Naive thymus-derived CD4-positive, alpha-beta T cell (primary cell): ENCODE measurements at regions of chr17 and their contacts with region 1.

Region 1: DNA sequence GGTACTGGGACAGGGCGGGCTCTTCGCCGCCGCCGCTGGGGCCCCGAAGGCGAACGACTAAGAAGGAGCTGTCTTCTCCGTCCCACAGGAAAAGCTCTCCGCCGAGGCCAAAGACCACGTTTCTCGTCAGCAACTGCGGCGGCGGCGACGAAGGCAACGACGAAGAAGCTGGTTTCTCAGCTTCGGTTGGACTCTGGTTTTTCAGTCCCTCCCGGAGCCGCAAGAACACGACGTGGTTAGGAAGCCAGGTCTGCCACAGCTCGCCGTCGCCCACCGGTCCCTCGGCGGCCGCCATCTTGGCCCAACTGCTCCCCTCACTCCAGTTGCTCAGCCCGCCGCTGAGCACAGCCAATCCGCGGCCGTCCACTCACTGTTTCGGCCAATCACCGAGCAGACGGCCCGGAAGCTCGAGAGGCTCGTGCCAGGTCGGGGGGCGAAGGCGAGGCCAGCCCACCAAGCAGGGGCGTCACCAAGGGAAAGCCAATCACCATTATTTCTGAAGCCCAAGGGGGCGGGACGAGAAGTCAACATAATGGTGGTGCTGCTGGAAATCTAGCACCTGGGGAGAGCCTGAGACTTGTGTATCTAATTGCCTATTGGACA is at the start of gene NUP88:
- DNase-seq: peak; percentile 86 to 97 (median 95)
- ATAC-seq: peak; percentile 94
- H3K4me3 ChIP-seq: peak within 1 kb of the TSS; percentile 93
- H3K4me3 Mint-ChIP-seq: peak within 1 kb of the TSS; percentile 93 to 100 (median 98)
- H3K27ac ChIP-seq: peak within 1 kb of the TSS; percentile 94
- H3K27ac Mint-ChIP-seq: peak within 1 kb of the TSS; percentile 89 to 100 (median 99)
- H3K4me1 ChIP-seq: peaks cover 26% of the 10 kb centered on the region in 2 donors
- H3K4me1 Mint-ChIP-seq: peaks cover 16 to 56% (median 40%) of the 10 kb centered on the region in 7 donors
- H3K27me3 ChIP-seq: no peaks in the 10 kb centered on the region
- H3K27me3 Mint-ChIP-seq: peaks cover 0 to 2% (median 0%) of the 10 kb centered on the region in 5 donors
- total RNA-seq, gene NUP88: 85.7 to 135 (median 111) TPM

Region 2: GRCh38 chr17:4997302-4998026 is 422.0 kb before region 1 on chr17 and contains the starts of genes INCA1 and KIF1C:
- CTCF ChIA-PET with region 1: no interaction called
- POLR2A ChIA-PET with region 1: no interaction called
- intact Hi-C with region 1: loop called in 1 of 2 experiments (anchors 2 kb)
- DNase-seq: peak; percentile 84 to 95 (median 92)
- ATAC-seq: peak; percentile 99
- H3K4me3 ChIP-seq: peak within 1 kb of the TSS; percentile 75
- H3K4me3 Mint-ChIP-seq: peak within 1 kb of the TSS; percentile 80 to 95 (median 88)
- H3K27ac ChIP-seq: peak within 1 kb of the TSS; percentile 83
- H3K27ac Mint-ChIP-seq: peak within 1 kb of the TSS; percentile 76 to 95 (median 88)
- H3K4me1 ChIP-seq: peaks cover 8 to 11% of the 10 kb centered on the region in 2 donors
- H3K4me1 Mint-ChIP-seq: peaks cover 18 to 29% (median 26%) of the 10 kb centered on the region in 7 donors
- H3K27me3 ChIP-seq: no peaks in the 10 kb centered on the region
- H3K27me3 Mint-ChIP-seq: no peaks in the 10 kb centered on the region
- total RNA-seq, gene INCA1: 0.38 to 0.42 (median 0.41) TPM in 4 of 5 experiments, not detected in the other
- total RNA-seq, gene KIF1C: 11.5 to 46.5 (median 21.0) TPM

Region 3: DNA sequence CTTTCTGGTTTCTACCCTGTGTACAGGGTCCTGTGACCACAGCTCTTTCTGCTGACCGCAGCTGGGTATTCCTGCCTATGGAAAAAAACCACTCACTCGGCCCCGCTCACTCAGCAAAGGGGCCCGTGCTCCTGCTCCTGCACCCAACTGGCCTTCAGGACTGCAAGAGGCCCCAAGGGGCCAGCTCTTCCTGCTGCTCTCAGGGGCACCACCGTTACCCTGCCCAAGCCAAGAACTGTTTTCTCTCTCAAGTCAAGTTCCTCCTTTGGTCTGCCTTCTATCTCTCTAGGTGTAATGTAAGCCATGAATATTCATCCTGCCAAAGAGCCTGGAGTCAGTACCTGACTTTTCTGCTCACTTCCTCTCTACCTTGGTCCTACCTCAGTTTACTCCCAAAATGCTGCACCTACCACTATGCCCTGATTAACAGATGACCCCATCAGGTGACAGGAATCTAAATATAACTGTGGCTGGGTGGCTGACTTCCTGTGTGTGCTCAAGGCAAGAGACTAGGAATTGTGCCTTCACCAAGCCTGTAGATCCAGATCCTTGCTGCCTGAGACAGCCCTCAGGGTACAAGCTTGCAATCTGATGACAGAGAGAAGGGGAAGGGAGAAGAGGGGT is 164.4 kb before region 1 on chr17:
- CTCF ChIA-PET with region 1: no interaction called
- POLR2A ChIA-PET with region 1: no interaction called
- intact Hi-C with region 1: no loop called
- DNase-seq: no peak
- ATAC-seq: no peak
- H3K4me3 ChIP-seq: no peak overlapping the region
- H3K4me3 Mint-ChIP-seq: peak overlapping the region in 2 of 10 donors; percentile 1 to 15
- H3K27ac ChIP-seq: no peak overlapping the region
- H3K27ac Mint-ChIP-seq: peak overlapping the region in 4 of 9 donors; percentile 3 to 72 (median 17)
- H3K4me1 ChIP-seq: peaks cover 0 to 7% of the 10 kb centered on the region in 2 donors
- H3K4me1 Mint-ChIP-seq: peaks cover 5 to 16% (median 14%) of the 10 kb centered on the region in 7 donors
- H3K27me3 ChIP-seq: no peaks in the 10 kb centered on the region
- H3K27me3 Mint-ChIP-seq: no peaks in the 10 kb centered on the region

Region 4: DNA sequence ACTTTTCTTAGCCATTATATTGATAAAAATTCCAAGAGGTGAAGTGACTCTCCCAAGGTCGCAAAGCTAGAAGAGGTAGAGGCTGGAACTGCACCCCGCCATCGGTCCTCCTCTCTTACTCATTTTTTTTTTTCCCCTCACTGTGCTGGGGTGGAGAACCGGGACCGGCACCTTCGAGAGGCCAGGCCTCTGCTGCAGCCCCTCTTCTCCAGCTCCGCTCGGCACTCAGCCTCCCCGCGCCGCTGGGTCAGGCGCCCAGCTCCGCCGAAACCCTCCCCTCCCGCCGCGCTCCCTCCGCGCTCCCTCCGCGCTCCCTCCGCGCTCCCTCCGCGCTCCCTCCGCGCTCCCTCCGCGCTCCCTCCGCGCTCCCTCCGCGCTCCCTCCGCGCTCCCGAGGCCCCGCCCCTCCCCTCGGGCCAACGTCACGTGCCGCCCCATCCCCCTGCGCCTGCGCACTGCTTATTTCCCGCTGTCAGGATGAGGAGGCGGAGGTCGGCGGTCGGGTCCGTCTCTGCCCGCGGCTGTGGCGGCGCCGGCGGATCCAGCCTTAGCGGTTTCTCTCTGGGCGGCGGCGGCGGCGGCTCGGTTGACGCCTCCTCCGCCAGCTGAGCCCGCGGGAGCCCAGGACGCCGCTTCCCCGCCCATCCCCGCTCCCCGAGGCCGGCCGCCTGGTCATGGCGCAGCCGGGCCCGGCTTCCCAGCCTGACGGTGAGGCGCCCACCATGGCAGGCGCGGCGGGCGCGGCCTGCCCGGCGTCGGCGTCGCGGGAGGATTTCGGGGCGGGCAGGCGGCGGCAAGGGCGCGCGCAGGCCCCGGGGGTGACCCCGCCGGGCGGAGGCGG is 137.4 kb before region 1 on chr17 and contains the start of gene RABEP1:
- CTCF ChIA-PET with region 1: no interaction called
- POLR2A ChIA-PET with region 1: no interaction called
- intact Hi-C with region 1: loop called in 1 of 2 experiments (anchors 1 kb)
- DNase-seq: peak; percentile 88 to 98 (median 92)
- ATAC-seq: peak; percentile 94
- H3K4me3 ChIP-seq: peak within 1 kb of the TSS; percentile 54
- H3K4me3 Mint-ChIP-seq: peak within 1 kb of the TSS; percentile 72 to 95 (median 88)
- H3K27ac ChIP-seq: peak within 1 kb of the TSS; percentile 86
- H3K27ac Mint-ChIP-seq: peak within 1 kb of the TSS; percentile 64 to 93 (median 88)
- H3K4me1 ChIP-seq: peaks cover 16 to 25% of the 10 kb centered on the region in 2 donors
- H3K4me1 Mint-ChIP-seq: peaks cover 24 to 47% (median 37%) of the 10 kb centered on the region in 7 donors
- H3K27me3 ChIP-seq: no peaks in the 10 kb centered on the region
- H3K27me3 Mint-ChIP-seq: no peaks in the 10 kb centered on the region
- total RNA-seq, gene RABEP1: 37.3 to 58.5 (median 44.6) TPM

Region 5: DNA sequence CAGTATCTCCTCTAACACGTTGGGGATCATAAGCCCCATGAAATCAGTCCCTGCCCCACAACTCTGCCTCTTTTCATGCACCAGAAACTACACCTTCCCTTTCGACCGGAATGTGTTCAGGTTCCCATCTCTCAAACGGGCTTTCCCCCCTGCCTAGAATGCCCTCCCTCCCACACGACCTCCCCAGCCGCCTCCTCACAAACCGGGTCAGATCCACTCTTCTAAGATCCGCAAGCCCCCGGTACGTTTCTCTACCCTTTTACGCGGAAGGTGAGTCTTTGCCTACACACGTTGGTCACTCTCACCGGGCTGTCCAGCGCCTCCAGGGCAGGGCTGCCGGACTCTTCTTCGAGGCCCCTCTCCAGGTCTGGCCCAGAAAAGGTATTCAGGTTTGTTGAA is 48.6 kb after region 1 on chr17:
- CTCF ChIA-PET with region 1: no interaction called
- POLR2A ChIA-PET with region 1: interaction called, 6 read pairs
- intact Hi-C with region 1: loop called (anchors 1 kb)
- DNase-seq: peak in 5 of 9 donors; percentile 11 to 44 (median 22)
- ATAC-seq: peak; percentile 34
- H3K4me3 ChIP-seq: peak overlapping the region; percentile 72
- H3K4me3 Mint-ChIP-seq: peak overlapping the region; percentile 83 to 95 (median 88)
- H3K27ac ChIP-seq: peak overlapping the region; percentile 68
- H3K27ac Mint-ChIP-seq: peak overlapping the region; percentile 12 to 85 (median 43)
- H3K4me1 ChIP-seq: peaks cover 11 to 12% of the 10 kb centered on the region in 2 donors
- H3K4me1 Mint-ChIP-seq: peaks cover 33 to 49% (median 43%) of the 10 kb centered on the region in 7 donors
- H3K27me3 ChIP-seq: no peaks in the 10 kb centered on the region
- H3K27me3 Mint-ChIP-seq: no peaks in the 10 kb centered on the region

Region 6: DNA sequence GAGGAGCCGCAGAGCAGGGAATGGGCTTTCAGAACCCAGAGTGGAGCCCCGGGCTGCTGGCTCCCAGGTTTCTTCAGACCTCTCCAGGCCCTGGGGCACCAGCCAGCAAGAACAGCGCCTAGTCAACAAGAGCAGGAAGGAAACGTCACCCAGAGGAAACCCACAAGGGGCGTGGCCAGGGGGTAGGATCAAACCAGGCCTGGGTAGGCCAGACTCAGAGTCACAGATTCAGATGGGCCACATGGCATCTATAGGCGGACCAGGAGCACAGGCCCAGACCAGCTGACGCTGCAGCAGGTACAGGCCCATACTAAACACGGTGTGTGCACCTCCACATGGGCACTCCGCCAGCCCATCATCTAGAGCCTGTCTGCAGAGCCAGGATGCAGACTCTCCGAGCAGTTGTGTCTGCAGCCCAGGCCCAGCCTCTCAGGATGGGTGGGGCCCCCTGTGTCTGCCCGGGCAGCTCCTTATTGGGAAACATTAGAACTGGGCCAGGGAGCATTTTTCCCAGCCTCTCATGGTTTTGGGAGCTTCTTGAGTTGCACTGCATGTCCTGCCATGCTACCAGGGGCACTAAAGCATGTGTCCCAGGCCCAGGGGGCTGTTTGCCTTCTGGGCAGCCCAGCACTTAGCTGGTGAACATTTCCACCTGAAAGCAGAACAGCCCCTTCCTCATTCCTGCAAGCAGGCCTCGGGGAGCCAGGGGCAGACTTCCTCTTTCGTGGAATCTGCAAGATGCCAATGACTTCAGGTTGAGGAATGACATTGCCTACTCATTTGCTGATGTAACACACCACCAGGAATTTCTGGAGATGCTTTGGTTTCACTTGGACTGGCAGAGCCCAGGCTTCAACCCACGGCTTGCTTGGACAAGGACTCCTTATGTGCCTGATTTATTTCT is 165.2 kb after region 1 on chr17 and contains the start of gene NLRP1:
- CTCF ChIA-PET with region 1: no interaction called
- POLR2A ChIA-PET with region 1: no interaction called
- intact Hi-C with region 1: loop called in 1 of 2 experiments (anchors 1 kb)
- DNase-seq: peak; percentile 78 to 97 (median 95)
- ATAC-seq: peak; percentile 96
- H3K4me3 ChIP-seq: peak within 1 kb of the TSS; percentile 97
- H3K4me3 Mint-ChIP-seq: peak within 1 kb of the TSS; percentile 94 to 100 (median 98)
- H3K27ac ChIP-seq: peak within 1 kb of the TSS; percentile 94
- H3K27ac Mint-ChIP-seq: peak within 1 kb of the TSS; percentile 90 to 100 (median 99)
- H3K4me1 ChIP-seq: peaks cover 44 to 67% of the 10 kb centered on the region in 2 donors
- H3K4me1 Mint-ChIP-seq: peaks cover 43 to 74% (median 63%) of the 10 kb centered on the region in 7 donors
- H3K27me3 ChIP-seq: no peaks in the 10 kb centered on the region
- H3K27me3 Mint-ChIP-seq: peaks cover 0 to 12% (median 0%) of the 10 kb centered on the region in 5 donors
- total RNA-seq, gene NLRP1: 86.6 to 360 (median 259) TPM

Region 7: GRCh38 chr17:7234083-7234951 is 1814.9 kb after region 1 on chr17 and contains the start of gene DVL2:
- CTCF ChIA-PET with region 1: no interaction called
- POLR2A ChIA-PET with region 1: no interaction called
- intact Hi-C with region 1: loop called in 1 of 2 experiments (anchors 5 kb)
- DNase-seq: peak; percentile 89 to 97 (median 93)
- ATAC-seq: peak; percentile 76
- H3K4me3 ChIP-seq: peak within 1 kb of the TSS; percentile 71
- H3K4me3 Mint-ChIP-seq: peak within 1 kb of the TSS; percentile 87 to 98 (median 96)
- H3K27ac ChIP-seq: peak within 1 kb of the TSS; percentile 84
- H3K27ac Mint-ChIP-seq: peak within 1 kb of the TSS; percentile 72 to 96 (median 93)
- H3K4me1 ChIP-seq: peaks cover 15 to 20% of the 10 kb centered on the region in 2 donors
- H3K4me1 Mint-ChIP-seq: peaks cover 41 to 61% (median 52%) of the 10 kb centered on the region in 7 donors
- H3K27me3 ChIP-seq: no peaks in the 10 kb centered on the region
- H3K27me3 Mint-ChIP-seq: peaks cover 0 to 2% (median 0%) of the 10 kb centered on the region in 5 donors
- total RNA-seq, gene DVL2: 51.2 to 91.5 (median 52.3) TPM